WTC11 (cell line): ENCODE measurements at regions of chr10 and their contacts with region 1.

Region 1: DNA sequence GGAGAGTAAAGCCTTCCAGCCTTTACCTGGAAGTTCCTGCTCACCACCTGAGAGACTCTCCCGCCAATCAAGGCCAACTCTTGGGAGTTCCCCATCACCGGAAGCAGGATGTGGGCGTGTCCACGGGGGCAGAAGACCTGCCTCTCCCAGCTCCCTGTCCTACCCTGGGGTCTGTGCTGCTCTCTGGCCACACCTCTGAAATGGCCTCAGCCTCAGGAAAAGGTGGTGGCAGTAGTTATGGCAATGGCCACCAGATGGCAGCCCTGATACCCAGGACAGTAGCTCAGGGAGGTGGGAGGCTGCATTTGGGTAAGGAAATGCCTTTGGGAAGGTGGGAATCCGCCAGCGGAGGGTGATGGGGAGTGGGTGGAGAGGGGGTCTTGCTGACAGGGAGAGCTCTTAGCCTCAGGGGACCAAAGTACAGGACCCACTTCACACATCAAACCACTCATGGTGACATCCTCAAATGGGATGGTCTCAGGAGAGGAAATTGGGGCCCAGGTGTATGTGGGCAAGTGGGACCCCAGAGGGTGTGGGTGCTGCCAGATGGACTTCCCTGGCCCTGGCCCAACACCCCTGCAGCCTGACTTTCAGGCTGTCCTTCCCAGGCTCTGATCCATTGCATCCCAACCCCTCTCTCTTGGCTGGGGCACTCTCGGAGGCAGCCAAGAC is 33.9 kb downstream of the KAZALD1 start:
- DNase-seq: peak; percentile 99
- ATAC-seq: peak; percentile 99
- H3K4me3 Mint-ChIP-seq: no peak overlapping the region
- H3K27ac Mint-ChIP-seq: no peak overlapping the region
- H3K4me1 Mint-ChIP-seq: peaks cover 22% of the 10 kb centered on the region
- H3K27me3 Mint-ChIP-seq: peaks cover 12% of the 10 kb centered on the region
- CTCF ChIP-seq: peak; percentile 64

Region 2: GRCh38 chr10:101031128-101031795 is 64.4 kb before region 1 on chr10 and contains the starts of genes PDZD7 and SFXN3:
- CTCF ChIA-PET with region 1: interaction called, 31 read pairs
- POLR2A ChIA-PET with region 1: no interaction called
- DNase-seq: peak; percentile 97
- ATAC-seq: peak; percentile 88
- H3K4me3 Mint-ChIP-seq: peak within 1 kb of the TSS; percentile 75
- H3K27ac Mint-ChIP-seq: no peak within 1 kb of the TSS
- H3K4me1 Mint-ChIP-seq: peaks cover 36% of the 10 kb centered on the region
- H3K27me3 Mint-ChIP-seq: peaks cover 55% of the 10 kb centered on the region
- CTCF ChIP-seq: no peak
- total RNA-seq, gene PDZD7: 1.9 to 2.7 TPM (median 2.6 TPM) in 3 replicates
- total RNA-seq, gene SFXN3: 2.5 to 5.6 TPM (median 3.2 TPM) in 3 replicates

Region 3: GRCh38 chr10:101060036-101060950 is 35.4 kb before region 1 on chr10:
- CTCF ChIA-PET with region 1: interaction called, 41 read pairs
- POLR2A ChIA-PET with region 1: no interaction called
- DNase-seq: peak; percentile 90
- ATAC-seq: peak; percentile 43
- H3K4me3 Mint-ChIP-seq: peak overlapping the region; percentile 97
- H3K27ac Mint-ChIP-seq: peak overlapping the region; percentile 98
- H3K4me1 Mint-ChIP-seq: peaks cover 38% of the 10 kb centered on the region
- H3K27me3 Mint-ChIP-seq: peaks cover 38% of the 10 kb centered on the region
- CTCF ChIP-seq: peak; percentile 84

Region 4: GRCh38 chr10:101110856-101111546 is 15.3 kb after region 1 on chr10:
- CTCF ChIA-PET with region 1: interaction called, 82 read pairs
- POLR2A ChIA-PET with region 1: interaction called, 4 read pairs
- DNase-seq: no peak
- ATAC-seq: peak; percentile 72
- H3K4me3 Mint-ChIP-seq: no peak overlapping the region
- H3K27ac Mint-ChIP-seq: no peak overlapping the region
- H3K4me1 Mint-ChIP-seq: peaks cover 25% of the 10 kb centered on the region
- H3K27me3 Mint-ChIP-seq: peaks cover 7% of the 10 kb centered on the region
- CTCF ChIP-seq: no peak

Region 5: GRCh38 chr10:101155896-101156295 is 60.2 kb after region 1 on chr10:
- CTCF ChIA-PET with region 1: interaction called, 13 read pairs
- POLR2A ChIA-PET with region 1: interaction called, 4 read pairs
- DNase-seq: no peak
- ATAC-seq: no peak
- H3K4me3 Mint-ChIP-seq: no peak overlapping the region
- H3K27ac Mint-ChIP-seq: no peak overlapping the region
- H3K4me1 Mint-ChIP-seq: peaks cover 12% of the 10 kb centered on the region
- H3K27me3 Mint-ChIP-seq: peaks cover 71% of the 10 kb centered on the region
- CTCF ChIP-seq: no peak

Region 6: GRCh38 chr10:102776779-102777456 is 1681.2 kb after region 1 on chr10:
- CTCF ChIA-PET with region 1: no interaction called
- POLR2A ChIA-PET with region 1: interaction called, 10 read pairs
- DNase-seq: peak; percentile 66
- ATAC-seq: peak; percentile 66
- H3K4me3 Mint-ChIP-seq: peak overlapping the region; percentile 41
- H3K27ac Mint-ChIP-seq: peak overlapping the region; percentile 32
- H3K4me1 Mint-ChIP-seq: peaks cover 70% of the 10 kb centered on the region
- H3K27me3 Mint-ChIP-seq: no peaks in the 10 kb centered on the region
- CTCF ChIP-seq: no peak